ENCODE measurements at regions of chr1 and their contacts with region 1.

Region 1: GRCh38 chr1:224513787-224514209 is 79.2 kb upstream of the WDR26 start:
- H3K4me3 Mint-ChIP-seq: no peak overlapping the region
- H3K27ac Mint-ChIP-seq: no peak overlapping the region
- H3K4me1 Mint-ChIP-seq: peaks cover 31% of the 10 kb centered on the region
- H3K27me3 Mint-ChIP-seq: no peaks in the 10 kb centered on the region

Region 2: DNA sequence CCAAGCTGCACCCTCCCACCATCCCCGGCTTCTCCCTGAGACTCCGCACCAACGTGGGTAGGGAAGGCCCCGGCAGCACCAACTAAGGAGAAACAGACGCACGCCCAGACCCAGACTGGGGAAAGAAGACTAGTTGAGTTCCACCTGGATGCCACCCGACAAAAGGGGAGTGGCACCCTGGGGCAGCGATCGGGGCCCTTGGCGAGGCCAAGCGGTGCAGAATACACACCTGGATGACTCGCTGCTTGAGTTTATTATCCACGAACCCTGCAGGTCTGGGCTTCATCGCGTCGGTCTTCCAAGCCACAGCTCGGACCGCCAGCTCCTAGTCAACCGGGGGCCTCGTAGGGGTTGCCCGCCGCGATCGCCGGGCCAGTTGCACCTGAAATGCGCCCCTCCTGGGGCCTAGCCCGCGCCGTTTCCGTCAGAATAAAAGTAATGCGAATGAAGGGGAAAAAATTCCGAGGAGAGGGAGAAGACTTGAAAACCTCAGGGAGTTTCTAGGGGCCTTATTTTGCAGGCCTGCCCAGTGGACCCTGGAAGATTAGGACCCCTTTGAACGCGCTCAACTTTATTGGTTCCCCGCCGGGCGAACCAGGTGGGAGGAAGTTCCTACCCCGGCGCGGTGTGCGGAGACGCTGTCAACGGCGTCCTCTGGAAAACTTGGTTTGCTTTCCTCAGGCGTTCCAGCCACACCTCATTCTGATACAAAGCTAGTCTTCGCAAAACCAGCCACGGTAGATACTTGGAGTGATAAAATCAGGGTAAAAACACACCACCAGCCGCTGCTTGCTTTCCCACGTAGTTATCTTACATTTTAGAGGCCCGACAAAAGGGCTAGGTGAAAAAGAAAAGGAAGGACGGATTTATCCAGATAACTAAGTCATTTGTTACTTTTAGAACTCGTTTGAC is 183.7 kb before region 1 on chr1 and contains the start of gene NVL:
- intact Hi-C with region 1: no loop called
- H3K4me3 Mint-ChIP-seq: peak within 1 kb of the TSS; percentile 91
- H3K27ac Mint-ChIP-seq: peak within 1 kb of the TSS; percentile 97
- H3K4me1 Mint-ChIP-seq: peaks cover 38% of the 10 kb centered on the region
- H3K27me3 Mint-ChIP-seq: no peaks in the 10 kb centered on the region

Region 3: GRCh38 chr1:224615861-224616755 is 102.3 kb after region 1 on chr1 and contains the start of gene CNIH3:
- intact Hi-C with region 1: loop called (anchors 10 kb)
- H3K4me3 Mint-ChIP-seq: peak within 1 kb of the TSS; percentile 76
- H3K27ac Mint-ChIP-seq: no peak within 1 kb of the TSS
- H3K4me1 Mint-ChIP-seq: peaks cover 27% of the 10 kb centered on the region
- H3K27me3 Mint-ChIP-seq: peaks cover 69% of the 10 kb centered on the region

Region 4: GRCh38 chr1:224644553-224645154 is 130.9 kb after region 1 on chr1:
- intact Hi-C with region 1: loop called (anchors 5 kb)
- H3K4me3 Mint-ChIP-seq: no peak overlapping the region
- H3K27ac Mint-ChIP-seq: no peak overlapping the region
- H3K4me1 Mint-ChIP-seq: peaks cover 4% of the 10 kb centered on the region
- H3K27me3 Mint-ChIP-seq: peaks cover 12% of the 10 kb centered on the region

Region 5: DNA sequence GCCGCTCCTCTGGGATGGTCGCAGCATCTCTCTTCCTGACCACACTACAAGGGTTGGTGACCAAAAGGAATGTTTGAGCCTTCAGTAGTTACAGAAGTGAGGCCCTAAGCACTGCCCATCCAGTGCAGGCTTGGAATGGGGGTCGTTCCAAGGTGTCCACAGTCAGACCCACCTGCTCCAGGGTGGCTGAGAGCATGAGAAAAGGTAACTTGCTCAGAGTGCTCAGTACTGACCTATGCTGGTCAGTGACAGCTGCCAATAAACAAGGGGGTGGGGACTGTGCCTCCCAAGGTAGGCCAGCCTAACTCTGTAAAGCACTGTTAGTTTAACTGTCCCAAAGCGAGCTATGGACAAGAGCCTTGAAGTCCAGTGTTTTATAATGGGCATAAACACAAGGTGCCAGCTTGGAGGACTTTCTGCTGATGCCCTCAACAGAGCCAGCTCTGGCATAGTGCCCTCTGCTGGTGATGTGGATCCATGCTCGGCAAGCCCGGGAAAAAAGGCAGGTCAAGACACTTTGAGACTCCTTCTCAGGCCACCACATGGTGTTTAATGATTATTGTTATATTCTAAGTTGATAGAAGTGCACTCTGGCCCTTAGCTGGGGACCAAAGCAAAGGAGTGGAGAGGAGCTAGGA is 337.5 kb after region 1 on chr1:
- intact Hi-C with region 1: loop called (anchors 1 kb)
- H3K4me3 Mint-ChIP-seq: no peak overlapping the region
- H3K27ac Mint-ChIP-seq: peak overlapping the region; percentile 3
- H3K4me1 Mint-ChIP-seq: no peaks in the 10 kb centered on the region
- H3K27me3 Mint-ChIP-seq: peaks cover 1% of the 10 kb centered on the region